Heart right ventricle (tissue), 16 donors: ENCODE measurements at regions of chr16 and their contacts with region 1.

Region 1: GRCh38 chr16:1308977-1309885 is at the start of gene UBE2I:
- DNase-seq: peak; percentile 96 to 98
- ATAC-seq: peak; percentile 87 to 94 (median 88)
- H3K4me3 ChIP-seq: peak within 1 kb of the TSS; percentile 60 to 99 (median 84)
- H3K27ac ChIP-seq: peak within 1 kb of the TSS; percentile 96 to 100 (median 99)
- H3K4me1 ChIP-seq: peaks cover 21 to 41% (median 36%) of the 10 kb centered on the region in 9 donors
- H3K27me3 ChIP-seq: no peaks in the 10 kb centered on the region
- CTCF ChIP-seq: no peak
- total RNA-seq, gene UBE2I: 70.6 to 99.8 (median 84.6) TPM

Region 2: GRCh38 chr16:1351582-1352362 is 42.5 kb after region 1 on chr16 and contains the starts of genes GNPTG and TSR3:
- intact Hi-C with region 1: loop called in 2 of 10 experiments (anchors 5 kb)
- DNase-seq: peak; percentile 82 to 90
- ATAC-seq: peak; percentile 65 to 91 (median 82)
- H3K4me3 ChIP-seq: peak within 1 kb of the TSS; percentile 68 to 99 (median 97)
- H3K27ac ChIP-seq: peak within 1 kb of the TSS in 9 of 10 donors; percentile 69 to 90 (median 83)
- H3K4me1 ChIP-seq: peaks cover 11 to 40% (median 32%) of the 10 kb centered on the region in 9 donors
- H3K27me3 ChIP-seq: no peaks in the 10 kb centered on the region
- CTCF ChIP-seq: no peak
- total RNA-seq, gene GNPTG: 24.8 to 43.4 (median 29.9) TPM
- total RNA-seq, gene TSR3: 41.5 to 63.6 (median 56.0) TPM

Region 3: GRCh38 chr16:1408171-1408837 is 99.1 kb after region 1 on chr16:
- intact Hi-C with region 1: loop called in 2 of 10 experiments (anchors 5 to 10 kb)
- DNase-seq: peak; percentile 96 to 97
- ATAC-seq: peak; percentile 92 to 98 (median 97)
- H3K4me3 ChIP-seq: peak overlapping the region; percentile 16 to 65 (median 56)
- H3K27ac ChIP-seq: peak overlapping the region in 9 of 10 donors; percentile 12 to 71 (median 55)
- H3K4me1 ChIP-seq: peaks cover 0 to 36% (median 24%) of the 10 kb centered on the region in 9 donors
- H3K27me3 ChIP-seq: no peaks in the 10 kb centered on the region
- CTCF ChIP-seq: no peak

Region 4: GRCh38 chr16:1413684-1414531 is 104.7 kb after region 1 on chr16:
- intact Hi-C with region 1: loop called in 2 of 10 experiments (anchors 5 to 10 kb)
- DNase-seq: peak in 1 of 2 donors; percentile 69
- ATAC-seq: peak; percentile 16 to 54 (median 33)
- H3K4me3 ChIP-seq: peak overlapping the region; percentile 51 to 99 (median 92)
- H3K27ac ChIP-seq: peak overlapping the region; percentile 75 to 93 (median 86)
- H3K4me1 ChIP-seq: peaks cover 0 to 38% (median 13%) of the 10 kb centered on the region in 9 donors
- H3K27me3 ChIP-seq: no peaks in the 10 kb centered on the region
- CTCF ChIP-seq: peak; percentile 38 to 79 (median 63)